Activated naive CD8-positive, alpha-beta T cell treated with anti-CD3 and anti-CD28 coated beads, Interleukin-2, amount 10 ng/mL, durations not matched to agents 7 days and 5 days (primary cell): ENCODE measurements at regions of chr6 and their contacts with region 1.

Region 1: GRCh38 chr6:135054569-135055498 is at the start of gene HBS1L:
- DNase-seq: peak; percentile 98
- ATAC-seq: peak; percentile 99
- H3K4me3 Mint-ChIP-seq: peak within 1 kb of the TSS; percentile 87
- H3K27ac Mint-ChIP-seq: peak within 1 kb of the TSS; percentile 90
- H3K4me1 Mint-ChIP-seq: peaks cover 31% of the 10 kb centered on the region
- H3K27me3 Mint-ChIP-seq: no peaks in the 10 kb centered on the region
- total RNA-seq, gene HBS1L: 72.6 to 72.7 TPM

Region 2: GRCh38 chr6:135021310-135022049 is 33.4 kb before region 1 on chr6:
- POLR2A ChIA-PET with region 1: interaction called, 14 read pairs
- DNase-seq: no peak
- ATAC-seq: peak; percentile 62
- H3K4me3 Mint-ChIP-seq: peak overlapping the region; percentile 62
- H3K27ac Mint-ChIP-seq: peak overlapping the region; percentile 70
- H3K4me1 Mint-ChIP-seq: peaks cover 38% of the 10 kb centered on the region
- H3K27me3 Mint-ChIP-seq: no peaks in the 10 kb centered on the region

Region 3: GRCh38 chr6:135094403-135094848 is 39.6 kb after region 1 on chr6:
- POLR2A ChIA-PET with region 1: interaction called, 15 read pairs
- DNase-seq: no peak
- ATAC-seq: peak; percentile 92
- H3K4me3 Mint-ChIP-seq: peak overlapping the region; percentile 44
- H3K27ac Mint-ChIP-seq: peak overlapping the region; percentile 91
- H3K4me1 Mint-ChIP-seq: peaks cover 45% of the 10 kb centered on the region
- H3K27me3 Mint-ChIP-seq: no peaks in the 10 kb centered on the region

Region 4: DNA sequence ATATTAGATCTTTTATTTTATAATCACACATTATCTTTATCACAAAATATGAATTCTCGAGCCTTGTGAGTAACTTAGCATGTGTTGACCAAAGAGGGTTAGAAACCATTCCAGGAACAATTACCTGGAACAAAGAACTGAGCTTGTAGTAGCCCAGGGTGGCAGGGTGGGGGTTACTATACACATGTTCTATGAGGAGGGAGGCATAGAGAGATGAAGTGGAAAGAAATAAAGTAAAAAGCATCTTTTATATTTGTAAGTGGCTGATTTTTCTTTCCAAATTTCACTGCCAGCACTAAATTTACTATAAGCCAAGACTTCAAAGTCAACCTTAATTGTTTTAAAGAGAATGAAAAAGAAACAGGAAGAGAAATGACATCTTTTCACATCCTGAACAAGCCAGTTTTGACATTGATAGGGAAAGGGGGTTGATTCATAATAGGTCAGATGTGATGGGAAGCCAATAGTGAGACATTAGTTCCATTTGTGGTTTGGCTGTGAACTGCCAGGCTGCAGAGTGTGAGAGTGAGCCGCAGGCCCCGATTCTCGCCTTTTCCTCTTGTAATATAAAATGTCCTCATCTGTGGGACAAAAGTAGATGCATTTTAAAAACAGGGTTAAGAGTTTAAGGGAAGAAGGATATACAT is 73.6 kb after region 1 on chr6:
- POLR2A ChIA-PET with region 1: interaction called, 20 read pairs
- DNase-seq: peak; percentile 47
- ATAC-seq: peak; percentile 93
- H3K4me3 Mint-ChIP-seq: peak overlapping the region; percentile 79
- H3K27ac Mint-ChIP-seq: peak overlapping the region; percentile 94
- H3K4me1 Mint-ChIP-seq: peaks cover 38% of the 10 kb centered on the region
- H3K27me3 Mint-ChIP-seq: no peaks in the 10 kb centered on the region

Region 5: DNA sequence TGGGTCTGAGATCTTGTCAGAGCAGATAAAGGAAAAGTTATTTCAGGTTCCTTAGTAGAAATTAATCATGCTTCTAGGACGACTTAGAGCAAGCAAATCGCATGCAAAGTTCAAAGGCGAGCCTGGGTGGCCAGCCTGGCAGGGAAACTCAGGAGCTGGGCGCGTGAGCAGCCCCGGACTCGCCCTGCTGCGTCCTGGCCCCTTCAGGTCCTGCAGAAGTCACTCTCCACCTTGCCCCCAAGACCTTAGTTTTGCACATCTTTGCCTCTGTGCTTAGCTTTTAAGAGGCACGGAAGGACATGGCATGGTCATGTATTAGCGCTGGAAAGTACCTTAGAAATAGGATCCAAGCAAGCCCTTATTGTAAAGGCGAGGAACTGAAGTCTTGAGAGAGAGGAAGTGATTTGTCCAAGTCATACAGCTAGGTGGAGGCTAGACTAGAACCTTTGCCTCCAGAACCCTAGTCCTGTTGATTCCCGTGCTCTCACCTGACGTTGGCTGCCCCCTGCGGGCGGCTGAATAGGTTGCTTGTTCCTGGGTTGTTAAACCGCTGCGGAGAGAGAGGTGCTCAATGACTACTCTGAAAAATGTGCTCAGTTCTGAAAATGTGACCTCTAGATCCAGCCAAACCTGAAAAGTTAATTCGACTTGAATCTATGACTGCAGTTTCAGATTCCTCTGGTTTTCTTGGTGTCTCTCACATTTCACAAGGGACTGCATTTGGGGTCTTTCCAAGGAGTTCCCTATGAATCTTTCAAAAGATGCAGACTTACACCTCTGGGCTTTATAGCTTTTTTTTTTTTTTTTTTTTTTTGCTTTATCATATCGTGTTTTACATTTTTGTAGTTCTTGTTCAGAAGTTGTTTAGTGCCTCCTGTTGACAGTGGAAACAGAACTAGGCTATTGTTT is 129.0 kb after region 1 on chr6:
- POLR2A ChIA-PET with region 1: interaction called, 35 read pairs
- DNase-seq: peak; percentile 80
- ATAC-seq: peak; percentile 51
- H3K4me3 Mint-ChIP-seq: peak overlapping the region; percentile 97
- H3K27ac Mint-ChIP-seq: peak overlapping the region; percentile 78
- H3K4me1 Mint-ChIP-seq: peaks cover 20% of the 10 kb centered on the region
- H3K27me3 Mint-ChIP-seq: no peaks in the 10 kb centered on the region